H1 (cell line): ENCODE measurements at regions of chr1 and their contacts with region 1.

Region 1: DNA sequence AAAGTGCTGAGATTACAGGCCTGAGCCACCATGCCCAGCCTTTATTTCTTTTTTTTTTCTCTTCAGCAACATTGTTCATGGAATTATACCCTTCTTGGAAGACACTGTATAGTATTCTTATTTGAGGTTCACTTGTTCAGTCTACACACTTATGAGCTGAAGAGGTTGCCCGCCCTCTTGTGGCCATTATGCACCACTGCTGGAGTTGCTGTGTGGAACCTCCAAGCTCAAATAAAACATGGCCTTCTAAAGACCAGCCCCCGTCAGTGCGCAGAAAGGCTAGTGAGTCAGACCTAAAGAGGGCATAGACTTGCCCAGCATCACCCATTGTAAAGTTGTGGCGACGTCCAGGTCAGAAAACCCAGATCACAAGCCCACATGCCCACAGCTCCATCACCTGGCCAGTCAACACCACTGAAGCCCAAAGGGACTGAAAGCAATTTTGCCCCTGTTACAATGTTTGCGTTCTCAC is 20.4 kb downstream of the LURAP1 start:
- DNase-seq: peak in 1 of 2 experiments; percentile 63
- H3K4me3 ChIP-seq: peak overlapping the region in 1 of 4 experiments; percentile 7; a peak in 1 of 8 replicates
- H3K27ac ChIP-seq: no peak overlapping the region
- H3K4me1 ChIP-seq: peaks cover 3 to 11% (median 7%) of the 10 kb centered on the region in 4 experiments; a peak in 6 of 7 replicates
- H3K27me3 ChIP-seq: no peaks in the 10 kb centered on the region
- CTCF ChIP-seq: peak; percentile 72 to 95 (median 76)
- EP300 ChIP-seq: no peak
- POLR2A ChIP-seq: no peak
- RAD21 ChIP-seq: peak; percentile 76 to 80

Region 2: DNA sequence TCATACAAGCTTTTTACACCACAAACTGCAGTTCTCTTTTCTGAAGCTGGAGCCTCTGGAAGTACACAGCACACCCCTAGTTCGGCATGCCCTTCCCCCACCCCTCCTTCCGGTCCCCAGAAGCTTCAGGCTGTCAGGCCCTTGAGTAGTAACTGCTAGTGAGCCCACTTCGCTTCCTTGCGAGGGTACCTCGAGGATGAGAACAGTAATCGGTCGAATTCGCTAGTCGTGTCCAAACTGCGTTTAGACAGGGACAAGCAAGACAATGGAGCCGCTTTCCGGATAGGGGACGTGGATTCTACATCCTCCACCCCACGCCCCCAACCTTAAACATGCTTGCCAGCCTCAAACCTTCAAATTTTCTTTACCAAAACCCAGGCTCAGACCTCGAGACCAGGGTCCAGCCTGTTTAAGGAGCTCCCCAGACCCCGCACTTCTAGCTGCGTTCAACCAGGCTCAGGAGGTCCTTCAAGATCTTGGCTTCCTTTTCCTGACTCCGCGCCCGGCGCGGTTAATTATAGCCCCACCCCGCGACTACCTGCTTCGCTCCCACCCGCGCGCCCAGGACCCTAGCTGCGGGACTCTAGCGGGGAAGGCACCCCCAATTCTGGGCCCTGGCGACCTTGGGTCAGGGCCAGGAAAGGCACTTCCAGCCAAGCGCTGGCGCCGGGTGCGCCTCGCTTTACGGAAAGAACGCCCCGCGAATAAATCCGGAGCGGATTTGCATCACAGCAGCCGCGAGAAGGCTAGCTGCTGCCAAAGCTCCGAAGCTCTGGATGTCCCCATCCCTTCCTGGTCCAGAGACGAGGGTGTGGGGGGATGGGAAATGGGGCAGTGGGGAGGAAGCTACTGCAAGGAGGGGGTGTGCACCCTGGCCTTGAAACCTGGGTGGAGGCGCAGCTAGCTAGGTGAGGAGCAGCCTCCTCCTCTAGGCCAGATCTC is 56.7 kb before region 1 on chr1:
- CTCF ChIA-PET with region 1: interaction called, 10 read pairs
- POLR2A ChIA-PET with region 1: no interaction called
- DNase-seq: peak in 1 of 2 experiments; percentile 70
- H3K4me3 ChIP-seq: peak overlapping the region; percentile 6 to 51 (median 20); a peak in 5 of 8 replicates
- H3K27ac ChIP-seq: no peak overlapping the region
- H3K4me1 ChIP-seq: peaks cover 0 to 20% (median 7%) of the 10 kb centered on the region in 4 experiments; a peak in 5 of 7 replicates
- H3K27me3 ChIP-seq: peaks cover 0 to 14% (median 9%) of the 10 kb centered on the region in 4 experiments; a peak in 5 of 7 replicates
- CTCF ChIP-seq: no peak
- EP300 ChIP-seq: no peak
- POLR2A ChIP-seq: no peak
- RAD21 ChIP-seq: no peak

Region 3: DNA sequence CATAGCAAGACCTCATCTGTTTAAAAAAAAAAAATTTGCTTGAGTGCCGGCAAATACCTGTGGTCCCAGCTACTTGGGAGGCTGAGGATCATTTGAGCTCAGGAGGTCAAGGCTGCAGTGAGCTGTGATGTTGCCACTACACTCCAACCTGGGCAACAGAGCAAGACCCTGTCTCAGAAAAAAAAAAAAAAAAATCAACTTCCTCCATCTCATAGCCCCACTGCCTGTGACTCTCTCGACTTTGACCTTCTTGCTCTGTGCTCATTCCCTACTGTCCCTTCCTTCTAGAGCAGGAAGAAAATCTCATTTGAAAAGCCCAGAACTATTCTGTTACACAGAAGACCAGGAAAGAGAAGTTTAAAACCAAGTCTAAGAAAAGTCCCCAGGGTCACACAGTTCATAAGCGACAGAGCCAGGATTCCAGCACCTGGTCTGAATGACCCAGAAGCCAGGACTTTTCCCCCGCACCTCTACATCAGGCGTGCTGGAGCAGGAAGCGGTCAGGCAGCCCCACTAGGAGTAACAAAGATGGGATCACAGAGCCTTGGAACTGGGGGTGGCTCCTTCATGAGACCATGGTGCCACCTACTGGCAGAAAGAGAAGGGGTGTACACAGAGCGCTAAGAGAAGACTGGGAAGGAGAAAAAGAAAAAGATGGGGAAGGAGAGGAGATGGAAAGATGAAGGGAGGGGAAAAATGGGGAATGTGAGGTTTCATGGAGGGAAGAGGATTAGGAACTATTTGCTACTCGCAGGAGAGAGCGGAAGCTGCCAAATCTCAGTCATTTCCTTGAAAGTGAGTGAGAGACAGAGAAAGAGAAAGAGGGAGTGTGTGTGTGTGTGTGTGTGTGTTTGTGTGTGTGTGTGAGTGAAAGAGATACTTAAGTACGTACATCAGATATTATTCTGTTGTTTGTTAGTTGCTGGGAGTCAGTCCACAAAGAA is 44.1 kb before region 1 on chr1:
- CTCF ChIA-PET with region 1: interaction called, 73 read pairs
- POLR2A ChIA-PET with region 1: interaction called, 6 read pairs
- DNase-seq: peak; percentile 44 to 85
- H3K4me3 ChIP-seq: no peak overlapping the region
- H3K27ac ChIP-seq: no peak overlapping the region
- H3K4me1 ChIP-seq: peaks cover 2 to 15% (median 6%) of the 10 kb centered on the region in 4 experiments
- H3K27me3 ChIP-seq: no peaks in the 10 kb centered on the region; a peak in 1 of 7 replicates
- CTCF ChIP-seq: peak; percentile 62 to 93 (median 87)
- EP300 ChIP-seq: peak in 1 of 2 experiments; percentile 16; a peak in 1 of 3 replicates
- POLR2A ChIP-seq: no peak
- RAD21 ChIP-seq: peak; percentile 97 to 98

Region 4: GRCh38 chr1:46197964-46198811 is 25.3 kb before region 1 on chr1 and contains the start of gene POMGNT1:
- CTCF ChIA-PET with region 1: interaction called, 34 read pairs
- POLR2A ChIA-PET with region 1: interaction called, 6 read pairs
- DNase-seq: peak in 1 of 2 experiments; percentile 82
- H3K4me3 ChIP-seq: peak within 1 kb of the TSS; percentile 46 to 84 (median 74)
- H3K27ac ChIP-seq: no peak within 1 kb of the TSS
- H3K4me1 ChIP-seq: peaks cover 0 to 8% (median 4%) of the 10 kb centered on the region in 4 experiments; a peak in 5 of 7 replicates
- H3K27me3 ChIP-seq: no peaks in the 10 kb centered on the region
- CTCF ChIP-seq: peak in 1 of 3 experiments; percentile 21; a peak in 2 of 4 replicates
- EP300 ChIP-seq: 0 out of 3 replicates have a peak, but pooled peaks of 1 of the 2 experiments have one; percentile 25
- POLR2A ChIP-seq: peak in 1 of 2 experiments; percentile 74; a peak in 2 of 3 replicates
- RAD21 ChIP-seq: peak; percentile 40 to 41; a peak in 3 of 4 replicates
- total RNA-seq, gene POMGNT1: 37.6 and 40.3 TPM in 2 replicates

Region 5: GRCh38 chr1:46211051-46211450 is 12.5 kb before region 1 on chr1:
- CTCF ChIA-PET with region 1: interaction called, 21 read pairs
- POLR2A ChIA-PET with region 1: interaction called, 4 read pairs
- DNase-seq: no peak
- H3K4me3 ChIP-seq: no peak overlapping the region
- H3K27ac ChIP-seq: no peak overlapping the region
- H3K4me1 ChIP-seq: no peaks in the 10 kb centered on the region
- H3K27me3 ChIP-seq: no peaks in the 10 kb centered on the region
- CTCF ChIP-seq: no peak
- EP300 ChIP-seq: no peak
- POLR2A ChIP-seq: no peak
- RAD21 ChIP-seq: no peak

Region 6: GRCh38 chr1:46247436-46248121 is 24.1 kb after region 1 on chr1 and contains the start of gene RAD54L:
- CTCF ChIA-PET with region 1: interaction called, 55 read pairs
- POLR2A ChIA-PET with region 1: interaction called, 16 read pairs
- DNase-seq: peak; percentile 96 to 98
- H3K4me3 ChIP-seq: peak within 1 kb of the TSS; percentile 87 to 94 (median 92)
- H3K27ac ChIP-seq: peak within 1 kb of the TSS; percentile 94
- H3K4me1 ChIP-seq: peaks cover 4 to 15% (median 5%) of the 10 kb centered on the region in 4 experiments; a peak in 5 of 7 replicates
- H3K27me3 ChIP-seq: no peaks in the 10 kb centered on the region
- CTCF ChIP-seq: no peak
- EP300 ChIP-seq: no peak
- POLR2A ChIP-seq: peak; percentile 75 to 97
- RAD21 ChIP-seq: no peak
- total RNA-seq, gene RAD54L: 47.9 and 50.3 TPM in 2 replicates